ENCODE measurements at regions of chr3 and their contacts with region 1.

Region 1: DNA sequence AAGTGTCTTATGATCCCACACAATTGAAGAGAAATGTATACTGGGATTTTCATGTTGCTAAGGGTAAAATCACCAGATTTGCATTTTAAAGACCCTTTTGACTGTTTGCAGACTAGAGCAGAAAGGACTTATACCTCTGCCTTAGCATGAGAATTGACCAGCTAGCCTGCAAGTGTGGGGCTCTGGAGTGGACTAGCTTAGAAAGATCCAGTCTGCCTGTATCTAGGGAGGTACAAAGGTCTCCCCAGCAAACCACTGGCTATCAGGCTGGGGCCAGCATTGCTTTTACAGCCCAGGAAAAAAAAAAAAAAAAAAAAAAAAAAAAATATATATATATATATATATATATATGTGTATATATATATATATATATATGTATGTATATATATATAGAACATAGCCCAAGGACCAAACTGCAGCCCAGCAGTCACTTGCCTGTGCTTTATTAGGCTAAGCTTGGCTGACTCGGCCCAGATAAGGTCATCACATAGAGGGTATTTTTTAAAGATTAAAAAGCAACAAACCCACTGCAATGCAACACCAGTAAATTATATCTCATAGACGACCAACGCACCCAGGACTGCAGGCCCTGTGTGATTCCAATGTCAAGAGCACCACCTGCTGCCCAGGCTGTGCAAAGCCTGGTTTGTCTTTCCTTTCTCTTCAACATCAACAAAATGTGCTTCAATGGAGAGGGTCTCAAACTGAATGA is 63.7 kb downstream of the DCLK3 start:
- DNase-seq: peak; percentile 55
- ATAC-seq: peak; percentile 94
- H3K4me3 ChIP-seq: no peak overlapping the region
- H3K27ac ChIP-seq: no peak overlapping the region
- H3K4me1 ChIP-seq: no peaks in the 10 kb centered on the region
- H3K27me3 ChIP-seq: no peaks in the 10 kb centered on the region
- CTCF ChIP-seq: peak; percentile 74

Region 2: DNA sequence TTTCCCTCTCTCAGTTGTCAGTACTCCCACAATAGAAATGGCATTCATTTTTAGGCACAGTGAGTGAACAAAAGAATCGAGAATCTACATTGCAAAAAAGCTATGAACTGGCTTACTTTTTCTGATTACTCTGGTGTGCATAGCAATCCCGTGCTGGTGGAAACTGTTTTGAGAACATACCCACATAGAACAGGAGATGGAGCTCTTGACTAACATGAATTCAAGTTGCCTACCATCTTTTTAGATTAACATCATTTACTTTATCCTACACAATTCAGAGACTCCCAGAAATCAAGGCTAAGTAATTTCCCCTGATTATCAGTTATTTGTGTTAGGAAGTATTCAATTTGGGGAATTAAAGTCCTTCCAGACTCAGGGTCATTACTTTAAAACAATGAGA is 734.8 kb before region 1 on chr3:
- CTCF ChIA-PET with region 1: interaction called, 4 read pairs
- POLR2A ChIA-PET with region 1: no interaction called
- in situ Hi-C with region 1: no loop called
- intact Hi-C with region 1: loop called (anchors 2 kb)
- DNase-seq: no peak
- ATAC-seq: no peak; the same call in 1 of the 2 replicates
- H3K4me3 ChIP-seq: no peak overlapping the region
- H3K27ac ChIP-seq: no peak overlapping the region
- H3K4me1 ChIP-seq: no peaks in the 10 kb centered on the region
- H3K27me3 ChIP-seq: no peaks in the 10 kb centered on the region
- CTCF ChIP-seq: peak; percentile 49; the same call in 1 of the 2 replicates

Measured in Panc1 (cell line).